ENCODE measurements at regions of chr10 and their contacts with region 1.

Region 1: DNA sequence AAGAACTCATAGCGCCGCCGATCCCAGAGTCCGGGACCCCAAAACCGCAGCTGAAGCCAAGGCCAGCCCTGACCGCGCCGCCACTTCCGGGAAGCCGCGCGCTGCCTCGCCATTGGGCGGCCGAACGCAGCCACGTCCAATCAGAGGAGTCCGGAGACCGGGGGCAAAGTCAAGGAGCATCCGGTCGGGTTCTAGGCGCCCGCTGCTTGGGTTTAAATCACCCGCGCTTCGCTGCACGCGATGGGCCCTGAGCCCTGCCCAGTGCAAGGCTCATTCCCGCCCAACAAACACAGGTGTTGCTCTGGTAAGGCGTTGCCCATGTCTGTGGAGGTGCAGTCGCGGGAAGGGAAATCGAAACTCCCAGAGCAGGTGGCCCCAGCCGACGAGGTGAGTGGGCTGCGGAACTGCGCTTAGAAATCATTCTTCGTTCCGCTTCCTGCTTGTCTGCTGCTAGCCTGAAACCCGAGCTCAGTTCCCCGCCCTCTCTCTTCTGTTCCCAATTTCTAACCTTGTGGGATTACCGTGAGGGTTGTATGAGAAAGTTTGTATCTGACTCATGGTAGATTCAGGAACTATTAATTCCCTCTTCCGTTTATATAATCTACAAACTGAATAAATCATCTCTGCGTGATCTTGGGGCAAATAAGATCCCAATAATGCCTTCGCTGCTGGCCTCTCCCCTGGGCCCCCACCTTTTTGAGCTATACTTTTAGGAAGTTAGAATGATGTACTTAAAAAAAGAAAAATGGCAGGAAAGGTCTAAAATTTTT is at the start of gene DCLRE1C:
- DNase-seq: peak; percentile 88 to 94
- H3K4me3 ChIP-seq: peak within 1 kb of the TSS; percentile 93
- H3K27ac ChIP-seq: peak within 1 kb of the TSS; percentile 97
- H3K4me1 ChIP-seq: peaks cover 14% of the 10 kb centered on the region
- H3K27me3 ChIP-seq: no peaks in the 10 kb centered on the region
- CTCF ChIP-seq: no peak
- total RNA-seq, gene DCLRE1C: 14.0 and 15.6 TPM in 2 replicates

Region 2: GRCh38 chr10:14625192-14625631 is 329.0 kb before region 1 on chr10:
- CTCF ChIA-PET with region 1: no interaction called
- POLR2A ChIA-PET with region 1: no interaction called
- intact Hi-C with region 1: no loop called
- DNase-seq: no peak
- H3K4me3 ChIP-seq: no peak overlapping the region
- H3K27ac ChIP-seq: no peak overlapping the region
- H3K4me1 ChIP-seq: no peaks in the 10 kb centered on the region
- H3K27me3 ChIP-seq: no peaks in the 10 kb centered on the region
- CTCF ChIP-seq: no peak

Region 3: GRCh38 chr10:14878266-14879054 is 75.7 kb before region 1 on chr10 and contains the start of gene SUV39H2:
- CTCF ChIA-PET with region 1: no interaction called
- POLR2A ChIA-PET with region 1: interaction called, 7 read pairs
- intact Hi-C with region 1: loop called (anchors 5 kb)
- DNase-seq: peak; percentile 76 to 96
- H3K4me3 ChIP-seq: peak within 1 kb of the TSS; percentile 67
- H3K27ac ChIP-seq: peak within 1 kb of the TSS; percentile 79
- H3K4me1 ChIP-seq: peaks cover 24% of the 10 kb centered on the region
- H3K27me3 ChIP-seq: no peaks in the 10 kb centered on the region
- CTCF ChIP-seq: no peak
- total RNA-seq, gene SUV39H2: 13.4 and 20.9 TPM in 2 replicates

Region 4: GRCh38 chr10:15084502-15084922 is 130.3 kb after region 1 on chr10:
- CTCF ChIA-PET with region 1: interaction called, 3 read pairs
- POLR2A ChIA-PET with region 1: interaction called, 3 read pairs
- intact Hi-C with region 1: loop called (anchors 1 kb)
- DNase-seq: peak; percentile 75 to 96
- H3K4me3 ChIP-seq: peak overlapping the region; percentile 58
- H3K27ac ChIP-seq: peak overlapping the region; percentile 44
- H3K4me1 ChIP-seq: peaks cover 10% of the 10 kb centered on the region
- H3K27me3 ChIP-seq: no peaks in the 10 kb centered on the region
- CTCF ChIP-seq: no peak

Measured in PC-9 (cell line).